ENCODE measurements at regions of chr1 and their contacts with region 1.

Region 1: DNA sequence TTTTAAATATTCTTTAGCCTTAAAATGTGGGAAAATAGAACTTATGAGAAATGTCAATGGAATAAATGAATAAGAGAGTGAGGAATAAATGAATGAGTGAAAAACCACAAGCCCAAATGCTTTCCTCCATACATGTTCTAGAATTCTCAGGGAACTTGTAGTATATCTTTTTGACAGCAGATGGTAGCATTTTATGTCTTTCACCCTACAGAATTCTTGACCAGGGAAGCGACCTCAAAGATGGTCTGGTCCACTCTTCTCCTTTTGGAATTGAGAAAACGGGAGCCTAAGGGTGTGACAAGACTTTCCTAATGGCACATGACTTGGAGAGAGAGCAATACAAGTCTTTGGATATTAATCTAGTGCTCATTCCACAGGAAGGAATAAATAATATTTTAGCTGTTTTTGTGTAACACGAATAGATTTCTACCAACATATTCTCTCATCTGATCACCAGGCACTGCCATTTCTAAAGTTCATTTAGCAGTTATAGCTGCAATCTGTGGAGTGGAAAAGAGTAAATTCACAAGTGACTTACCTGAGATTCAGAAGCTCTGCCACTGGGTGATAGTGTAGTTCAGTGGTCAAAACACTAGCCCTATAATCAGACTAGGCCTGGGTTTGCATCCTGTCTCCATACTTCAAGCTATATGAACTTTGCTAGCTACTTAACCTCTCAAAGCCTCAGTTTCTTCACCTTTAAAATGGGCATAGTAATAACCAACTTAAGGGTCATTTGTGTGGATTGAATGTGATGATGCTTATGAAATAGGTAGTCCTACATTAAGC is 15.0 kb upstream of the F5 start:
- H3K4me3 Mint-ChIP-seq: no peak overlapping the region
- H3K27ac Mint-ChIP-seq: no peak overlapping the region
- H3K4me1 Mint-ChIP-seq: peaks cover 30% of the 10 kb centered on the region
- H3K27me3 Mint-ChIP-seq: no peaks in the 10 kb centered on the region

Region 2: DNA sequence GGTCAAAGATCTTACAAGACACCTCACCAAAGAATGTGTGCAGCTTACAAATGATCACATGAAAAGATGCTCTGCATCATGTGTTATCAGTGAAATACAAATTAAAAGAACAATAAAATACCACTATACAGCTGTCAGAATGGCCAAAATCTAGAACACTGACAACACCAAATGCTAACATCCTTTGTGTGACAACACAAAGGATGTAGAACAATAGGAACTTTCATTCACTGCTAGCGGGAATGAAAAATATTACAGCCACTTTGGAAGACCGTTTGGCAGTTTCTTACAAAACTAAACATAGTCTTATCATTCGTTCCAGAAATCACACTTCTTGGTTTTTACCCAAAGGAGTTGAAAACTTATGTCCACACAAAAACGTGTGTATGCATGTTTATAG is 49.3 kb after region 1 on chr1:
- intact Hi-C with region 1: loop called (anchors 10 kb)
- H3K4me3 Mint-ChIP-seq: no peak overlapping the region
- H3K27ac Mint-ChIP-seq: no peak overlapping the region
- H3K4me1 Mint-ChIP-seq: peaks cover 6% of the 10 kb centered on the region
- H3K27me3 Mint-ChIP-seq: no peaks in the 10 kb centered on the region

Region 3: GRCh38 chr1:169809370-169810095 is 208.2 kb after region 1 on chr1:
- intact Hi-C with region 1: loop called (anchors 1 kb)
- H3K4me3 Mint-ChIP-seq: no peak overlapping the region
- H3K27ac Mint-ChIP-seq: no peak overlapping the region
- H3K4me1 Mint-ChIP-seq: no peaks in the 10 kb centered on the region
- H3K27me3 Mint-ChIP-seq: no peaks in the 10 kb centered on the region